HCT116 (cell line): ENCODE measurements at regions of chr15 and their contacts with region 1.

Region 1: GRCh38 chr15:78241007-78241406 is 6.6 kb upstream of the ACSBG1 start:
- DNase-seq: peak; percentile 63
- ATAC-seq: peak; percentile 99
- H3K4me3 ChIP-seq: no peak overlapping the region
- H3K27ac ChIP-seq: no peak overlapping the region
- H3K4me1 ChIP-seq: peaks cover 2 to 4% of the 10 kb centered on the region in 2 experiments; a peak in 2 of 4 replicates
- H3K27me3 ChIP-seq: no peaks in the 10 kb centered on the region
- CTCF ChIP-seq: peak; percentile 90 to 93 (median 92)
- POLR2A ChIP-seq: no peak
- RAD21 ChIP-seq: peak; percentile 97

Region 2: DNA sequence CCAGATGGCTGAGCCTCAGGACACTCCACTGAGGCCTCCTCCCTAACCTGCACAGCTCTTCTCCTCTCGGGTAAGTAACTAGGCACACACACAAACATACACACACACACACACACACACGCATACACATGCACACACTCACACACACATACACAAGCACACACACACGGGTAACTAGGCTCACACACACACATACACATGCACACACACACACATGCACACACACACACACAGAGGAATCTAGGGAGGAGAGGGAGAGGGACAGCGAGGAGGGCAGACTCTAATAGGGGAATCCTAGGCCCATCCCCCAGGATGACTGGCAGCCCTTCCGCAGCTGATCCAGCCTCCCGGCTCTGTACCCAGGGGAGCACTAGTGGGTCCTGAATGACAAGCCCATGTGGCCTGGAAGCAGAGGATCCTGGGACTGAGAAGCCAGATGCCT is 430.9 kb before region 1 on chr15:
- CTCF ChIA-PET with region 1: no interaction called
- POLR2A ChIA-PET with region 1: no interaction called
- RAD21 ChIA-PET with region 1: no interaction called
- intact Hi-C with region 1: no loop called
- DNase-seq: no peak
- ATAC-seq: no peak
- H3K4me3 ChIP-seq: no peak overlapping the region
- H3K27ac ChIP-seq: no peak overlapping the region
- H3K4me1 ChIP-seq: no peaks in the 10 kb centered on the region
- H3K27me3 ChIP-seq: no peaks in the 10 kb centered on the region
- CTCF ChIP-seq: no peak
- POLR2A ChIP-seq: no peak
- RAD21 ChIP-seq: no peak

Region 3: DNA sequence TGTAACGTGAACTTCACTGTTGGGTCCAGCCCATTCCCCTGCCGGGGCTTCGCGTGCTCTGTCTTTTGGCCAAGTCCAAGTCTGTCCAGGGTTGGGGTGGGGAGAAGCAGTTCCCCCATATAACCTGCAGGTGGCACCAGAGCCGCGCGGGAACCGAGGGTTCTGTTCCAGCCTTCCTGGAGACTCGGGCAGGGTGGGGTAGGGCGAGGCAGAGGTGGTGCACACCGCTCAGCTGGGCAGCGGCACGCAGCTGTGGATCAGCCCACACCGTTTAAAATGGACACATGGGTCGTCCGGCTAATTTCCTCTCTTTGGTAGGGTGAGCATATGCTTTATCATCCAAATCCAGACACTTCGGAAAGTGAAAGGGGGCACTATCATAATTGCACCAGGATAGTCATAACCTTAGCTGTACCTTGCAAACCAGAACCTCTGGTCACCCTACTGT is 281.6 kb before region 1 on chr15:
- CTCF ChIA-PET with region 1: interaction called, 18 read pairs
- POLR2A ChIA-PET with region 1: no interaction called
- RAD21 ChIA-PET with region 1: interaction called in 1 of 2 experiments, 3 read pairs
- intact Hi-C with region 1: loop called (anchors 1 kb)
- DNase-seq: peak; percentile 63
- ATAC-seq: peak; percentile 100
- H3K4me3 ChIP-seq: peak overlapping the region; percentile 33 to 36
- H3K27ac ChIP-seq: no peak overlapping the region
- H3K4me1 ChIP-seq: peaks cover 0 to 11% of the 10 kb centered on the region in 2 experiments; a peak in 2 of 4 replicates
- H3K27me3 ChIP-seq: no peaks in the 10 kb centered on the region
- CTCF ChIP-seq: peak; percentile 92 to 94 (median 93)
- POLR2A ChIP-seq: no peak
- RAD21 ChIP-seq: peak; percentile 95

Region 4: DNA sequence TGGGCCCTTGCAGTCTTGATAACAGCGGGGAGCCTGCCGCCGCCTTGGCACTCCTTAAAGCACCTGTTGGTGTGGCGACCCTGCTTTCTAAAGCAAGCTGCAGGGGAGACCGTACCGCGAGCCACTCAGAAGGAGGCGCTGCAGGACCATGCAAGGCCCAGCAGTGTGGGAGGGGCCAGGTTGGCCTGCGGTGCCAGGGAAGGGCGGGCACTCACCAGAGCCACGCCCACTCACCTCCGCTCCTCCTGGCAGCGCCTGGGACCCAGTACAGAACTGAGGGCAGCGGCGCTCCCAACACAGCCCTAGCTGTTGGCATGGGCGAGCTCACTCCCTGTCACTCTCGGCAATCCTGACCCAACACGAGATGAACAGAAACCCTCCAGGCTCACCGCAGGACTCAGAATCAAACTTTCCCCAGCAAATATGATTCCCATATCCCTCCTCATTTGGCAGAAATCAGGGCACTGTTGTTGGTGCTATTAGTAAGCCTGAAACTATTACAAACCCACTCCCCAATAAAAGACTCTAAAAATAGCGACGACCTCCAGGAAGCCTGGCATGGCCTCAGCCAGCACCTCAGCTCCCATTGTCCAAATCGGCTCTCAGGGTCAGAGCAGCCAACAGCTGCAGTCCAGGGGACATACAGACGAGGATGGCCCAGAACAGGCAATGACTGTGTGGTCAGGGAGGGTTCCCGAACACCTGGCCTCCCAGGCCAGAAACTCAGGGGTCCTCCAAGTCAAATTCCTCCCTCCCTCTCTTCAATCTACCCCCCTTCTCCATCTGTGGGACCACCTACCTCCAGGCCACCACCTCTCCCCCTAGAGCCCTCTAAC is 240.7 kb before region 1 on chr15:
- CTCF ChIA-PET with region 1: interaction called, 3 read pairs
- POLR2A ChIA-PET with region 1: no interaction called
- RAD21 ChIA-PET with region 1: no interaction called
- intact Hi-C with region 1: loop called (anchors 1 kb)
- DNase-seq: peak; percentile 81
- ATAC-seq: peak; percentile 100
- H3K4me3 ChIP-seq: no peak overlapping the region
- H3K27ac ChIP-seq: no peak overlapping the region
- H3K4me1 ChIP-seq: peaks cover 0 to 5% of the 10 kb centered on the region in 2 experiments; a peak in 1 of 4 replicates
- H3K27me3 ChIP-seq: no peaks in the 10 kb centered on the region
- CTCF ChIP-seq: peak; percentile 84 to 94 (median 85)
- POLR2A ChIP-seq: no peak
- RAD21 ChIP-seq: peak; percentile 97

Region 5: GRCh38 chr15:78077058-78077877 is 163.7 kb before region 1 on chr15 and contains the start of gene TBC1D2B:
- CTCF ChIA-PET with region 1: no interaction called
- POLR2A ChIA-PET with region 1: no interaction called
- RAD21 ChIA-PET with region 1: no interaction called
- intact Hi-C with region 1: no loop called
- DNase-seq: no peak
- ATAC-seq: peak; percentile 87
- H3K4me3 ChIP-seq: peak within 1 kb of the TSS; percentile 62 to 81
- H3K27ac ChIP-seq: peak within 1 kb of the TSS; percentile 76
- H3K4me1 ChIP-seq: peaks cover 12 to 19% of the 10 kb centered on the region in 2 experiments
- H3K27me3 ChIP-seq: no peaks in the 10 kb centered on the region
- CTCF ChIP-seq: no peak
- POLR2A ChIP-seq: no peak
- RAD21 ChIP-seq: no peak
- total RNA-seq, gene TBC1D2B: 16.6 TPM

Region 6: DNA sequence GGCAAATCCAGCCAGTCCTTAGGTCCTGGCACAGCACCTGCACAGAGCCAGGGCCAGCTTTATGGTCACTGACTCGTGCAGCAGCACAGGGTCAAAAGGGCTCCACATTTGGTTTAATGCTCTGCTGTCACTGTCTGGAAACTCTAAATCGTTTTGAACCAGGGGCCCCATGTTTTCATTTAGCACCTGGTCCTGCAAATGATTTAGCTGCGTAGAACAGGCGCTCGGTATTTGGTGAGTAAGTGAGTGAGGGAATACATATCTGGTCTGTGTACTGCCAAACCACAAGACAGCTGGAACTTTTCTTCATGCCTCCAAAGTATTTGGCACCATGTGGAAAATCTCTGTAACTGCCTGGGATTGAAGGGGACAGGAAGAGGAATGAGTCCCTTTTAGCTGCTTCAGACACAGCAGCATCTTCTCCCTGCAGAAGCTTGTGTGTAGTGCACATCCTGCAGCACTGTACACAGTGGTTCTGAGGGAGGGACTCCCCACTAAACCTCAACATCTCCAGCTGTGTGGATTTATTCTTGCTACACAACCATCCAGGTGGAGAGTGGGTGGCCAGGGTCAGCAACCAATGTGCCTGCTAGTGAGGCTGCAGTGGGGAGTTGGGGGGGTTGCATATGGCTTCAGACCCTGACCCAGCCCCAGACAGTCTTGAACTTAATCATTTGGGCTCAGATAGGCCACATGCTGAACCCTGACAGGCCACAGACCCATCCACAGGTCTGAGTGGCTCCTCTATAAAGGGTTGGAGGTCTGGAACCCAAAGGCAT is 147.6 kb before region 1 on chr15:
- CTCF ChIA-PET with region 1: no interaction called
- POLR2A ChIA-PET with region 1: no interaction called
- RAD21 ChIA-PET with region 1: no interaction called
- intact Hi-C with region 1: no loop called
- DNase-seq: no peak
- ATAC-seq: no peak
- H3K4me3 ChIP-seq: no peak overlapping the region
- H3K27ac ChIP-seq: no peak overlapping the region
- H3K4me1 ChIP-seq: no peaks in the 10 kb centered on the region
- H3K27me3 ChIP-seq: no peaks in the 10 kb centered on the region
- CTCF ChIP-seq: no peak
- POLR2A ChIP-seq: no peak
- RAD21 ChIP-seq: no peak

Region 7: GRCh38 chr15:78131295-78132061 is 109.5 kb before region 1 on chr15 and contains the start of gene CIB2:
- CTCF ChIA-PET with region 1: interaction called, 6 read pairs
- POLR2A ChIA-PET with region 1: interaction called, 4 read pairs
- RAD21 ChIA-PET with region 1: no interaction called
- intact Hi-C with region 1: loop called (anchors 1 kb)
- DNase-seq: no peak
- ATAC-seq: peak; percentile 88
- H3K4me3 ChIP-seq: peak within 1 kb of the TSS; percentile 77 to 78
- H3K27ac ChIP-seq: peak within 1 kb of the TSS; percentile 73
- H3K4me1 ChIP-seq: peaks cover 15 to 45% of the 10 kb centered on the region in 2 experiments; a peak in 3 of 4 replicates
- H3K27me3 ChIP-seq: no peaks in the 10 kb centered on the region
- CTCF ChIP-seq: peak; percentile 30 to 59 (median 48); a peak in 5 of 6 replicates
- POLR2A ChIP-seq: peak; percentile 26
- RAD21 ChIP-seq: peak; percentile 63
- total RNA-seq, gene CIB2: 17.3 TPM

Region 8: GRCh38 chr15:78177447-78177873 is 63.5 kb before region 1 on chr15:
- CTCF ChIA-PET with region 1: interaction called, 39 read pairs
- POLR2A ChIA-PET with region 1: no interaction called
- RAD21 ChIA-PET with region 1: interaction called, 4 to 5 read pairs
- intact Hi-C with region 1: loop called (anchors 1 kb)
- DNase-seq: peak; percentile 13
- ATAC-seq: peak; percentile 90
- H3K4me3 ChIP-seq: no peak overlapping the region
- H3K27ac ChIP-seq: no peak overlapping the region
- H3K4me1 ChIP-seq: no peaks in the 10 kb centered on the region
- H3K27me3 ChIP-seq: no peaks in the 10 kb centered on the region
- CTCF ChIP-seq: peak; percentile 87 to 89 (median 89)
- POLR2A ChIP-seq: no peak
- RAD21 ChIP-seq: peak; percentile 94